OCI-LY7 (cell line): ENCODE measurements at regions of chr21 and their contacts with region 1.

Region 1: GRCh38 chr21:33299181-33299752 is 25.5 kb upstream of the IFNAR1 start:
- DNase-seq: peak; percentile 89
- H3K4me3 ChIP-seq: peak overlapping the region; percentile 25
- H3K27ac ChIP-seq: peak overlapping the region; percentile 95
- H3K4me1 ChIP-seq: peaks cover 98% of the 10 kb centered on the region
- CTCF ChIP-seq: peak; percentile 67

Region 2: GRCh38 chr21:33096426-33096825 is 202.8 kb before region 1 on chr21:
- CTCF ChIA-PET with region 1: no interaction called
- POLR2A ChIA-PET with region 1: no interaction called
- intact Hi-C with region 1: no loop called
- DNase-seq: peak; percentile 4
- H3K4me3 ChIP-seq: no peak overlapping the region
- H3K27ac ChIP-seq: no peak overlapping the region
- H3K4me1 ChIP-seq: no peaks in the 10 kb centered on the region
- CTCF ChIP-seq: no peak

Region 3: GRCh38 chr21:33109574-33110339 is 189.5 kb before region 1 on chr21:
- CTCF ChIA-PET with region 1: no interaction called
- POLR2A ChIA-PET with region 1: no interaction called
- intact Hi-C with region 1: no loop called
- DNase-seq: no peak
- H3K4me3 ChIP-seq: no peak overlapping the region
- H3K27ac ChIP-seq: no peak overlapping the region
- H3K4me1 ChIP-seq: no peaks in the 10 kb centered on the region
- CTCF ChIP-seq: no peak

Region 4: DNA sequence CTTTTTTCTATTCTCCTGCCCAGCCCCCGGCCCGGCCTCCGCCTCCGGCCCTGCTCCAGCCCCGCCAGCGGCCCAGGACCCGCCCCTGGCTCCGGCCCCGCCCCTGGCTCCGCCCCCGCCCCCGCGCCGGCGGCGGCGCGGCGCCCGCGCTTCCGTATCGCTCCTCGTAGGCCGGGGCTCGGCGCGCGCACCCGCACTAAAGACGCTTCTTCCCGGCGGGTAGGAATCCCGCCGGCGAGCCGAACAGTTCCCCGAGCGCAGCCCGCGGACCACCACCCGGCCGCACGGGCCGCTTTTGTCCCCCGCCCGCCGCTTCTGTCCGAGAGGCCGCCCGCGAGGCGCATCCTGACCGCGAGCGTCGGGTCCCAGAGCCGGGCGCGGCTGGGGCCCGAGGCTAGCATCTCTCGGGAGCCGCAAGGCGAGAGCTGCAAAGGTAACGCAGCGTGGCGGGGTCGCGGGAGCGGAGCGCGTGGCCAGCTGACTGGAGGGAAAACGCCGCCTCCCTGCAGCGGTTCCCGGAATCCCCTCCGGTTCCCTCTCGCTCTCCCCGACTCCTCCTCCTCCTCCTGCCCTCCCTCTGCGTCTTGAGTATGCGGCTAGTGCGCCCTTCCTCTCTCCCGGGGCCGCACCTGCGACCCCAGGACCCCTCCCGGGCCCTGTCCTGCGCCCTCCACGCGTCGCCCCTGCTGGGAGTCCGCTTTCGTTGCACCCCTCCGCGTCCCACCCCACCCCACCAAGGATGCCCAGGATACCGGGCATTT is 69.3 kb before region 1 on chr21 and contains the start of gene IFNAR2:
- CTCF ChIA-PET with region 1: no interaction called
- POLR2A ChIA-PET with region 1: interaction called, 5 read pairs
- intact Hi-C with region 1: loop called (anchors 5 kb)
- DNase-seq: peak; percentile 75
- H3K4me3 ChIP-seq: peak within 1 kb of the TSS; percentile 86
- H3K27ac ChIP-seq: peak within 1 kb of the TSS; percentile 76
- H3K4me1 ChIP-seq: peaks cover 46% of the 10 kb centered on the region
- CTCF ChIP-seq: no peak
- total RNA-seq, gene IFNAR2: 22.1 and 24.8 TPM in 2 replicates

Region 5: GRCh38 chr21:33249331-33250002 is 49.8 kb before region 1 on chr21:
- CTCF ChIA-PET with region 1: no interaction called
- POLR2A ChIA-PET with region 1: no interaction called
- intact Hi-C with region 1: no loop called
- DNase-seq: no peak
- H3K4me3 ChIP-seq: no peak overlapping the region
- H3K27ac ChIP-seq: no peak overlapping the region
- H3K4me1 ChIP-seq: no peaks in the 10 kb centered on the region
- CTCF ChIP-seq: no peak

Region 6: DNA sequence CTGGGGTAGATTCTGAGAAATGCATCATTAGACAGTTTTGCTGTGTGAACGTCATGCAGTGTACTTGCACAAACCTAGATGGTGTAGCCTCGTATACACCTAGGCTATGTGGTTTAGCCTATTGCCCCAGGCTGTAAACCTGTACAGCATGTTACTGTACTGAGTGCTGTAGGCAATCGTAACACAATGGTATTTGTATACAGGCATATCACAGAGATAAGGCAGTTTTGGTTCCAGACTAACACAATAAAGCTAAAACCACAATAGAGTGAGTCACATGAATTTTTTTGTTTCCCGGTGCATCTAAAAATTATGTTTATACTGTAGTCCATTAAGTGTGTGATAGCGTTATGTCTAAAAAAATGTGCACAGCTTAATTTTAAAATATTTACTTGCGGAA is 26.2 kb before region 1 on chr21:
- CTCF ChIA-PET with region 1: interaction called, 4 read pairs
- POLR2A ChIA-PET with region 1: interaction called, 12 read pairs
- intact Hi-C with region 1: loop called (anchors 1 kb)
- DNase-seq: no peak
- H3K4me3 ChIP-seq: no peak overlapping the region
- H3K27ac ChIP-seq: no peak overlapping the region
- H3K4me1 ChIP-seq: peaks cover 21% of the 10 kb centered on the region
- CTCF ChIP-seq: no peak

Region 7: GRCh38 chr21:33317145-33317544 is 17.9 kb after region 1 on chr21:
- CTCF ChIA-PET with region 1: interaction called, 3 read pairs
- POLR2A ChIA-PET with region 1: interaction called, 121 read pairs
- intact Hi-C with region 1: loop called (anchors 2 kb)
- DNase-seq: no peak
- H3K4me3 ChIP-seq: no peak overlapping the region
- H3K27ac ChIP-seq: no peak overlapping the region
- H3K4me1 ChIP-seq: peaks cover 39% of the 10 kb centered on the region
- CTCF ChIP-seq: no peak

Region 8: DNA sequence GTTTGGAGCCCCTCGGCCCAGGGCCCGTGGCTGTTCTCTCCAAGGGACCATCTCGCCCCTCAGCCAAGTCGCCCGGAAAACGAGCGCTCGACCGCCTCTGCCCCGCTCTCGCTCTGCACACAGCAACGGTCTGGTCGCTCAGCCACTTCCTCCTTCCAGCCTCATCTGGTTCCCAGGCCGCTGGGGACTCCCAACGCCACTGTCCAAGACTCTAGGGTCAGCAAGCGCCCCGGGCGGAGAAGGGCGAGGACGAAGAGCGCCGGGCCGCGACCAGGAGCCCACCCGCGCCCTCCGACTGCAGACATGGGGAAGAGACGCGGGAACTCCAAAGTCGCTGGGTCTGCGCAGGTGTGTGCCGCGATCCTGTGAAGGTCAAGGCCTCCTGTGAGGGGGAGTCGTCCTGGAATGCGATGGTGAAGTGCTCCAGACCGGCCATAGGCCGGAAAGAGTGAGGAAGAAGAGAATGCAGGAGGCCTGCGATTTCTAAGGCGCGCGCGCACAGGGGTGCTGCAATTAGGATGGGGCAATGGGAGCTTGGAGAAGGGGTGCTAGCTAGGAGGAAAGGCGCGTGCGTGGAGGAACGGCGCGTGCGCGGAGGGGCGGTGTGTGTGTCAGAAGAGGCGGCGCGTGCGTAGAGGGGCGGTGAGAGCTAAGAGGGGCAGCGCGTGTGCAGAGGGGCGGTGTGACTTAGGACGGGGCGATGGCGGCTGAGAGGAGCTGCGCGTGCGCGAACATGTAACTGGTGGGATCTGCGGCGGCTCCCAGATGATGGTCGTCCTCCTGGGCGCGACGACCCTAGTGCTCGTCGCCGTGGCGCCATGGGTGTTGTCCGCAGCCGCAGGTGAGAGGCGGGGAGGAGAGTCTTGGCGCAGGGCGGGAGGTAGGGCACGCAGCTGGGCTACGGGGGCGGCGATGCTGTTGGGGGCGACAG is 25.3 kb after region 1 on chr21 and contains the start of gene IFNAR1:
- CTCF ChIA-PET with region 1: no interaction called
- POLR2A ChIA-PET with region 1: interaction called, 16 read pairs
- intact Hi-C with region 1: no loop called
- DNase-seq: peak; percentile 98
- H3K4me3 ChIP-seq: peak within 1 kb of the TSS; percentile 79
- H3K27ac ChIP-seq: peak within 1 kb of the TSS; percentile 87
- H3K4me1 ChIP-seq: peaks cover 36% of the 10 kb centered on the region
- CTCF ChIP-seq: 0 out of 2 replicates have a peak, but pooled peaks have one; percentile 25
- total RNA-seq, gene IFNAR1: 17.0 and 18.1 TPM in 2 replicates

Region 9: DNA sequence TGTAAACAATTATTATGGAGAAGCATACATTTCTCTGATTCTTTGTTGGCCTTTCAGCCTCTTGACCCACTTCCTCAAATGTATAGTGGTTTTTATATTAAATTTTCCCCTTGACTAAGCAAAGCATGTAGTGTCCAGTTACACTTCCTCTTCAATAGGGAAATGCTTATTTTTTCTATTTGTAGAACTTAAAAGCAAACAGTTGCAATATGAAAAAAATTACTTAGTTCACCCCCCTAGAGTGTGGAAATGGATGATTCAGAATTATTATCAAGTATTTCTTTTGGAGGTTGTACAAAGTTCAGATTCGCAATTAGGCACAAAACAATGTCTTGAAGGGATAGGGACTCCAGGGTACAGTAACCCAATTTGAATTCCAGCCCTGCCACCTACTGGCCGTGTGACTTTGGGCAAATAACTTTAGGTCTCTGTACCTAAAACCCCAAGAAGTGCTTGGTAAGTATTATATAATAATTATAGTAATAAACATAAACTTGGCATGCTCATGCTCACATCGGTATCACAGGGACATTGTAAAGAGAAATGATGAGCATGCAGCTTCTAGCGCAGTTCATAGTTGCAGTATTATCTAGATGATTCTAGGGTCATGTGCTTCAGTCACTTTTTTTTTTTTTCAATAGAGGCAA is 75.3 kb after region 1 on chr21:
- CTCF ChIA-PET with region 1: no interaction called
- POLR2A ChIA-PET with region 1: interaction called, 3 read pairs
- intact Hi-C with region 1: loop called (anchors 2 kb)
- DNase-seq: peak; percentile 87
- H3K4me3 ChIP-seq: peak overlapping the region; percentile 50
- H3K27ac ChIP-seq: peak overlapping the region; percentile 96
- H3K4me1 ChIP-seq: peaks cover 76% of the 10 kb centered on the region
- CTCF ChIP-seq: peak; percentile 95

Region 10: DNA sequence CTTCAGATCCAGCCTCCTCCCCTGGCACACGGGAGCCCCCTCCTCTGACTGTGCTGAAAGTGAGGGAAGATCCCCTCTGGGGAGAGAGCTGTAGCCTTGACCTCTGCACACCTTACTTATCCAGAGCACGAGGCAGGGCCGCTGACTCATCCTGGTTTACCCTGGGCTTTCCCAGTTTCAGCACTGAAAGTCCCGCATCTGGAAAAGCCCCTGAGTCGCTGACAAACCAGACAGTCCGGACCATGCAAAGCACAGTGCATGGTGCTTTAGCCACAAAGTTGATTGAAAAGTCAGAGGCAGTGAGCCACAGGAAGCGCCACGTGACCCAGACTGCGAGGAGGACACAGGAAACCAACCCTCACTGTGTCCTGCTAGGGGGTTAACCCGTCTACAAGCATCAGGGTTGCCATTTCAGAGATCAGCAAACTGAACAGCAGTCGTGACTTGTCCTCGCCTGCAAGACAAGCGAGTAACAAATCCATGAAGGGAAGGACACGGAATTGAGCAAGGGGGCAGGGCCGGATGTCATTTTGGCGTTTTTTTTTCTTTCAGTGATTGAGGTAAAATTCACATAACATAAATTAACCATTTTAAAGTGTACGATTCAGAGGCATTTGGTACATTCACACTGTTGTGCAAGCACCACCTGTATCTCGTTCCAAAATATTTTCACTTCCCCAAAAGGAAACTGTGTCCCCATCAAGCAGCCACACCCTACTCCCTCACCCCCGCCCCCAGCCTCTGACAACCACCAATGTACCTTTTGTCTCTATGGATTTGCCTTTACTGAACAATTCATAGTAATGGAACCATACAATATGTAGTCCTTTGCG is 84.0 kb after region 1 on chr21:
- CTCF ChIA-PET with region 1: interaction called, 6 read pairs
- POLR2A ChIA-PET with region 1: interaction called, 4 read pairs
- intact Hi-C with region 1: loop called (anchors 2 kb)
- DNase-seq: peak; percentile 96
- H3K4me3 ChIP-seq: peak overlapping the region; percentile 69
- H3K27ac ChIP-seq: peak overlapping the region; percentile 99
- H3K4me1 ChIP-seq: peaks cover 86% of the 10 kb centered on the region
- CTCF ChIP-seq: no peak; the same call in 1 of the 2 replicates